ENCODE measurements at regions of chr11 and their contacts with region 1.

Region 1: DNA sequence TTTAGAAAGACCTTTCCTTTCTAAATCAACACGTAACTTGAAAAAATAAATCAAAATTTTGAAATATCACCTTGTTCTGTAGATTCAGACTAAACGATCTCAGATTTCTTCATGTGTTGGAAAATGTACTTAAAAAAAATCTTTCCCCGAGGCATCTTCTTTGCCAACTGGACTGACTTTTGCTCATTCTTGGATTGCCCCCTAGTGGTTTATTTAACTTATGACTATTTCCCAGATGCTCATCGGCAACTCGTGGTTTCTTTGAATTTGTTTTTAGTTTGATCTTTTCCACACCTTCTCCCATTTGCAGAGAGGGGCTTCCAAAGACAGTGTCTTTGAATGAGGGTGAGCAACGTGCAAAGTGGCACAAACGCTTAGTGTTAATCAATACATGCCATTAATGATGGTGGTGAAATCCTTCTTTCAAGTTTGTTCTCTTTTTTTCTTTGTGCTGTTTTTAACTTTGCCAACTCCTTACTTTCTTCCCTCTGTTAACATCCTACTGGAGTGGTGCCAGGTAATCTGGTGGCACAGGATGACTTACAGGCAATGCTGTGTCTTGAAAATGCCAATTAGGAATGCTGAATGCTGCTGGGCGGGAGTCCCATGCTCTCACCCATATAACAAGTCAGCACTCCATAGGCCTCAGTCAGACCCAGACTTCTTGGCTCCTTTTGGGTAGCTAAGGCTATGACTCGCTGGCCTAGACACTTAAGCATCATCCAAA is 18.3 kb downstream of the PRSS23 start:
- DNase-seq: no peak
- H3K4me3 ChIP-seq: no peak overlapping the region
- H3K27ac ChIP-seq: no peak overlapping the region
- H3K4me1 ChIP-seq: no peaks in the 10 kb centered on the region
- H3K27me3 ChIP-seq: no peaks in the 10 kb centered on the region
- CTCF ChIP-seq: peak; percentile 83 to 92 (median 85)
- POLR2A ChIP-seq: no peak

Region 2: GRCh38 chr11:86456052-86456939 is 362.3 kb before region 1 on chr11:
- intact Hi-C with region 1: loop called (anchors 10 kb)
- DNase-seq: peak; percentile 77 to 86
- H3K4me3 ChIP-seq: no peak overlapping the region
- H3K27ac ChIP-seq: peak overlapping the region in 1 of 2 donors; percentile 85
- H3K4me1 ChIP-seq: peaks cover 0 to 10% of the 10 kb centered on the region in 2 donors
- H3K27me3 ChIP-seq: no peaks in the 10 kb centered on the region
- CTCF ChIP-seq: peak; percentile 68 to 88 (median 87)
- POLR2A ChIP-seq: no peak

Region 3: GRCh38 chr11:86795890-86796289 is 22.7 kb before region 1 on chr11:
- intact Hi-C with region 1: loop called (anchors 2 kb)
- DNase-seq: no peak
- H3K4me3 ChIP-seq: no peak overlapping the region
- H3K27ac ChIP-seq: no peak overlapping the region
- H3K4me1 ChIP-seq: no peaks in the 10 kb centered on the region
- H3K27me3 ChIP-seq: no peaks in the 10 kb centered on the region
- CTCF ChIP-seq: no peak
- POLR2A ChIP-seq: no peak

Measured in breast epithelium (tissue), 4 donors.